ENCODE measurements at regions of chr12 and their contacts with region 1.

Region 1: DNA sequence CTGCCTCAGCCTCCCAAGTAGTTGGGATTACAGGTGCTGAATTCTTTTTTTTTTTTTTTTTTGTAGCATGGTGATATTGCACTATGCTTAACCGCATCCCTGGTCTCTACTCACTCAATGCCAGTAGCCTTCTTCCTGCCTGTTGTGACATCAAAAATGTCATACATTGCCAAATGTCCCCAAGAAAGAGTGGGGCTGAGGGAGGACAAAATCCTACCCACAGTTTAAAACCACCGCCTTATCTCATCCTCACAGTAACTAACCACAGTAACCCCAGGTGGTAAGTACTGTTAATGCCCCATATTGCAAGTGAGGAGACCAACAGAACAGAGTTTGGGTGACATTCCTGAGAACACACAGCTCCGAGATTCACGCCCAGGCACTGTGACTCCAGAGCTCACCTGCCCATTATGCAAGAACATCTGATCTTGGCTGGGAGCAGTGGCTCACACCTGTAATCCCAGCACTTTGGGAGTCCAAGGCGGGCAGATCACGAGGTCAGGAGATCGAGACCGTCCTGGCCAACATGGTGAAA is 19.6 kb downstream of the MORN3 start:
- DNase-seq: no peak
- ATAC-seq: peak; percentile 73
- H3K4me3 Mint-ChIP-seq: peak overlapping the region; percentile 39
- H3K27ac Mint-ChIP-seq: peak overlapping the region; percentile 87
- H3K4me1 Mint-ChIP-seq: peaks cover 27% of the 10 kb centered on the region
- H3K27me3 Mint-ChIP-seq: no peaks in the 10 kb centered on the region

Region 2: GRCh38 chr12:121637231-121637914 is 12.5 kb before region 1 on chr12:
- POLR2A ChIA-PET with region 1: interaction called, 13 read pairs
- DNase-seq: peak; percentile 76
- ATAC-seq: peak; percentile 87
- H3K4me3 Mint-ChIP-seq: peak overlapping the region; percentile 66
- H3K27ac Mint-ChIP-seq: peak overlapping the region; percentile 94
- H3K4me1 Mint-ChIP-seq: peaks cover 45% of the 10 kb centered on the region
- H3K27me3 Mint-ChIP-seq: no peaks in the 10 kb centered on the region

Measured in activated naive CD8-positive, alpha-beta T cell treated with anti-CD3 and anti-CD28 coated beads, Interleukin-2, amount 10 ng/mL, durations not matched to agents 7 days and 5 days (primary cell).